ENCODE measurements at regions of chrX and their contacts with region 1.

Region 1: DNA sequence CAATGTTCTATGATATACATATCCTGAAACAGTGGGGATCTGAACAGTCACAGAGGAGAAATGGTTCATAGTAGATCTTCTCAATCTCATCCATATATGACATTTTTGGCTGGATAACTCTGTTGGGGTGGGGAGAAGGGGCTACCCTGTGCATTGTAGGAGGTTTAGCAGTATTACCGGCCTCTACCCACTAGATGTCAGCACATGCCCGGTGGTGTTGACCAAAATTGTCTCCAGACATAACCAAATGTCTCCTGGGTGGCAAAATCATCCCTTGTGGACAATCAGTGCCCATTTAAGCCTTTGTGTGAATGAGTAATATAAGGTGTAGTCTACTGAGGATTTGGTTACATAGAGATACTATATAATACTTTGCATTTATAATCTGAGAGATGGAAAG is 89.9 kb downstream of the PLS3 start:
- DNase-seq: peak in 6 of 10 donors; percentile 20 to 60 (median 44)
- H3K4me3 ChIP-seq: no peak overlapping the region
- H3K27ac ChIP-seq: peak overlapping the region in 12 of 59 donors; percentile 0 to 48 (median 22)
- H3K27me3 ChIP-seq: peaks cover 0 to 83% (median 6%) of the 10 kb centered on the region in 45 donors
- CTCF ChIP-seq: peak in 54 of 56 donors; percentile 34 to 82 (median 64)

Region 2: GRCh38 chrX:115112411-115112810 is 538.5 kb before region 1 on chrX:
- intact Hi-C with region 1: no loop called
- DNase-seq: no peak
- H3K4me3 ChIP-seq: no peak overlapping the region
- H3K27ac ChIP-seq: no peak overlapping the region
- H3K27me3 ChIP-seq: peaks cover 0 to 40% (median 4%) of the 10 kb centered on the region in 45 donors
- CTCF ChIP-seq: no peak

Region 3: GRCh38 chrX:115690511-115691216 is 39.7 kb after region 1 on chrX:
- intact Hi-C with region 1: loop called in 1 of 2 experiments (anchors 5 kb)
- DNase-seq: peak in 5 of 10 donors; percentile 25 to 67 (median 41)
- H3K4me3 ChIP-seq: peak overlapping the region in 14 of 59 donors; percentile 4 to 33 (median 14)
- H3K27ac ChIP-seq: peak overlapping the region in 22 of 59 donors; percentile 3 to 75 (median 31)
- H3K27me3 ChIP-seq: peaks cover 0 to 90% (median 29%) of the 10 kb centered on the region in 45 donors
- CTCF ChIP-seq: peak; percentile 57 to 91 (median 82)

Region 4: DNA sequence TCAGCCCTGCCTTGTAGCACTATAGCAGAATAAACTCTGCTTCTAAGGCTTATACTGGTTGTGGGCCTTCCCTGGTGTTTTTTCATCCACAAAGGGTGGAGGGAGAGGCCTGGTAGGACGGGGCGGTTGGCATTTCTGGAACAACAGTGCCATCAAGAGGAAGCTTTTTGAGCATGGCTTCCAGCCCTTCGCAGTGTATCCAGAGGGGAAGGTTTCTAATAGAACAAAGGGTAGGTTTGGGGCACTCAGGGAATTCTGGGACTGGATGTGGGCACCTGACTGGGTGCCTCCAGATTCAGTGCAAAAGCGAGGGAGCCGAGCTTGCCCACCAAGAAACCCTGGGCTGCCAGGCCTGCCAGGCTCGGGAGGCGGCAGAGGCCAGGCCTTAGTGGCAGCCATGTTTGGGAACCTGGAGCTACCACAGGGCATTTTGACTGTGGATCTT is 290.0 kb after region 1 on chrX:
- intact Hi-C with region 1: loop called in 1 of 2 experiments (anchors 5 kb)
- DNase-seq: peak; percentile 55 to 92 (median 85)
- H3K4me3 ChIP-seq: peak overlapping the region in 41 of 59 donors; percentile 14 to 57 (median 39)
- H3K27ac ChIP-seq: peak overlapping the region in 52 of 59 donors; percentile 37 to 95 (median 87)
- H3K27me3 ChIP-seq: peaks cover 0 to 20% (median 0%) of the 10 kb centered on the region in 45 donors
- CTCF ChIP-seq: peak in 54 of 56 donors; percentile 22 to 94 (median 76)

Measured in dorsolateral prefrontal cortex (tissue), 120 donors.